CD8-positive, alpha-beta T cell (primary cell): ENCODE measurements at regions of chr3 and their contacts with region 1.

Region 1: GRCh38 chr3:9986237-9986725 is 360 bp downstream of the EMC3 start:
- DNase-seq: no peak
- ATAC-seq: peak; percentile 46
- H3K4me3 ChIP-seq: peak overlapping the region; percentile 71 to 83
- H3K4me3 Mint-ChIP-seq: peak overlapping the region; percentile 93
- H3K27ac ChIP-seq: peak overlapping the region; percentile 83 to 93
- H3K27ac Mint-ChIP-seq: peak overlapping the region; percentile 96
- H3K4me1 ChIP-seq: peaks cover 24% of the 10 kb centered on the region
- H3K4me1 Mint-ChIP-seq: peaks cover 39% of the 10 kb centered on the region
- H3K27me3 ChIP-seq: no peaks in the 10 kb centered on the region
- H3K27me3 Mint-ChIP-seq: no peaks in the 10 kb centered on the region
- CTCF ChIP-seq: no peak

Region 2: GRCh38 chr3:9792405-9793160 is 193.7 kb before region 1 on chr3 and contains the starts of genes ARPC4 and TADA3:
- CTCF ChIA-PET with region 1: interaction called, 4 read pairs
- POLR2A ChIA-PET with region 1: interaction called, 3 read pairs
- intact Hi-C with region 1: loop called in 1 of 2 experiments (anchors 2 kb)
- DNase-seq: peak; percentile 82 to 97 (median 92)
- ATAC-seq: peak; percentile 83
- H3K4me3 ChIP-seq: peak within 1 kb of the TSS; percentile 76 to 96
- H3K4me3 Mint-ChIP-seq: peak within 1 kb of the TSS; percentile 94
- H3K27ac ChIP-seq: peak within 1 kb of the TSS; percentile 93 to 98
- H3K27ac Mint-ChIP-seq: peak within 1 kb of the TSS; percentile 98
- H3K4me1 ChIP-seq: peaks cover 48% of the 10 kb centered on the region
- H3K4me1 Mint-ChIP-seq: peaks cover 58% of the 10 kb centered on the region
- H3K27me3 ChIP-seq: no peaks in the 10 kb centered on the region
- H3K27me3 Mint-ChIP-seq: no peaks in the 10 kb centered on the region
- CTCF ChIP-seq: no peak
- total RNA-seq, gene ARPC4: 97.7 to 104 TPM
- total RNA-seq, gene TADA3: 9.5 to 11.0 TPM

Region 3: DNA sequence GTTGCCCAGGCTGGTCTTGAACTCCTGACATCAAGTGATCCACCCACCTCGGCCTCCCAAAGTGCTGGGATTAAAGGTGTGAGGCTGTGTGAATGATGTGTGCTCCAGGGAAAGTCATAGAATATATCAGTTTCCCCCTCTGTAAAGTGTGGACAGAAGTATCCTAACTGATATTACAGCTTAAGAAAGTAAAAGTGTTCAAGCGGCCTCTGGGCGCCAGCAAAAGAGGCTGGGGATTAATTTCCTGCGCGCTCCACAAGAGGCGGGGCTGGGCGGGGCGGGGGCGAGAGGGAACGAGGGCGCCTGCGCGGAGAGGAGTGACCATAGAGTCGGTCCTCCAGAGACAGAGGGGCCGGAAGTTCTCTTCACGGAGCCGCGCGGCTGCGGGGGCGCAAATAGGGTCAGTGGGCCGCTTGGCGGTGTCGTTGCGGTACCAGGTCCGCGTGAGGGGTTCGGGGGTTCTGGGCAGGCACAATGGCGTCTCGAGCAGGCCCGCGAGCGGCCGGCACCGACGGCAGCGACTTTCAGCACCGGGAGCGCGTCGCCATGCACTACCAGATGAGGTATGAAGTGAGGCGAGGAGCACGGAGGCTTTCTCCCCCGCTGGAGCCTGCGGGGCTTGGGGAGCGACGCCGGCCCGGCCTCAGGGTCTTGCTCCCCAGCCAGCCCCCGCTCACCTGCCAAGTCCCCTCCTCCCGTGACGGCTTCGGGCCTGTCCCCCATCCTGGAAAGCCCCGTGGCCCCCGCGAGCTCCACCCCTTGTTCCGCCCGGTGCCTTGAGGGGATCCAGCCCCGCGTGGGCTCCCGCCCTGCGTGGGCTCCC is 95.8 kb before region 1 on chr3 and contains the start of gene JAGN1:
- CTCF ChIA-PET with region 1: no interaction called
- POLR2A ChIA-PET with region 1: interaction called, 8 read pairs
- intact Hi-C with region 1: loop called (anchors 1 to 2 kb)
- DNase-seq: peak; percentile 86 to 94 (median 91)
- ATAC-seq: peak; percentile 92
- H3K4me3 ChIP-seq: peak within 1 kb of the TSS; percentile 95 to 96
- H3K4me3 Mint-ChIP-seq: peak within 1 kb of the TSS; percentile 98
- H3K27ac ChIP-seq: peak within 1 kb of the TSS; percentile 99 to 100
- H3K27ac Mint-ChIP-seq: peak within 1 kb of the TSS; percentile 100
- H3K4me1 ChIP-seq: peaks cover 16% of the 10 kb centered on the region
- H3K4me1 Mint-ChIP-seq: peaks cover 40% of the 10 kb centered on the region
- H3K27me3 ChIP-seq: no peaks in the 10 kb centered on the region
- H3K27me3 Mint-ChIP-seq: no peaks in the 10 kb centered on the region
- CTCF ChIP-seq: no peak
- total RNA-seq, gene JAGN1: 13.4 to 14.5 TPM

Region 4: GRCh38 chr3:10010486-10011465 is 24.5 kb after region 1 on chr3:
- CTCF ChIA-PET with region 1: interaction called, 3 read pairs
- POLR2A ChIA-PET with region 1: no interaction called
- intact Hi-C with region 1: loop called (anchors 1 to 2 kb)
- DNase-seq: peak; percentile 46 to 88 (median 75)
- ATAC-seq: peak; percentile 54
- H3K4me3 ChIP-seq: peak overlapping the region; percentile 50 to 55
- H3K4me3 Mint-ChIP-seq: peak overlapping the region; percentile 68
- H3K27ac ChIP-seq: no peak overlapping the region
- H3K27ac Mint-ChIP-seq: no peak overlapping the region
- H3K4me1 ChIP-seq: peaks cover 17% of the 10 kb centered on the region
- H3K4me1 Mint-ChIP-seq: peaks cover 18% of the 10 kb centered on the region
- H3K27me3 ChIP-seq: no peaks in the 10 kb centered on the region
- H3K27me3 Mint-ChIP-seq: peaks cover 7% of the 10 kb centered on the region
- CTCF ChIP-seq: no peak

Region 5: GRCh38 chr3:10142707-10143566 is 156.7 kb after region 1 on chr3:
- CTCF ChIA-PET with region 1: no interaction called
- POLR2A ChIA-PET with region 1: no interaction called
- intact Hi-C with region 1: loop called in 1 of 2 experiments (anchors 1 kb)
- DNase-seq: peak in 3 of 9 experiments; percentile 22 to 51 (median 33)
- ATAC-seq: no peak
- H3K4me3 ChIP-seq: peak overlapping the region; percentile 73 to 74
- H3K4me3 Mint-ChIP-seq: peak overlapping the region; percentile 93
- H3K27ac ChIP-seq: peak overlapping the region in 1 of 2 experiments; percentile 54
- H3K27ac Mint-ChIP-seq: peak overlapping the region; percentile 98
- H3K4me1 ChIP-seq: peaks cover 32% of the 10 kb centered on the region
- H3K4me1 Mint-ChIP-seq: peaks cover 32% of the 10 kb centered on the region
- H3K27me3 ChIP-seq: no peaks in the 10 kb centered on the region
- H3K27me3 Mint-ChIP-seq: no peaks in the 10 kb centered on the region
- CTCF ChIP-seq: no peak